ENCODE measurements at regions of chr5 and their contacts with region 1.

Region 1: DNA sequence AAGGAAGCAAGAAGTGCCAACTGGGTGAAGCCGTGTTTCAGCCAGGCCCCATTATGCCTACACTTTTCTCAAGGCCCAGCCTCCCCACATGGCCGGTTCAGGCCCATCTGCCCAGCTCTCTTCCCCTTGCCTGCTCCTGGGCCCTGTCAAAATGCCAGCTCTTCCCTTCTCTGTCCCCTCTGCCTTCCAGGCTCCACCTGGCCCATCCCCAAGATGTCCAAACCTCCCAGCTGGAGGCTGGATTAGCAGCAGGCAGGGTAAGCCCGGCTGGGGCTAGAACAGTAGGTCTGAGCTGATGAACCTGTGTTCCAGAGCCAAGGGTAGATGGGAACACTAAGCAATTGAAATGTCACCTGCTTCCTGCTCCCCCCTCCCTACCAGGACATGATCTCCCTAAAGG is 64.1 kb upstream of the HSPA9 start:
- DNase-seq: no peak
- ATAC-seq: no peak
- H3K4me3 ChIP-seq: no peak overlapping the region
- H3K4me3 Mint-ChIP-seq: no peak overlapping the region
- H3K27ac ChIP-seq: no peak overlapping the region
- H3K27ac Mint-ChIP-seq: no peak overlapping the region
- H3K4me1 ChIP-seq: peaks cover 0 to 2% of the 10 kb centered on the region in 2 experiments
- H3K4me1 Mint-ChIP-seq: peaks cover 0 to 5% (median 0%) of the 10 kb centered on the region in 3 donors
- H3K27me3 ChIP-seq: peaks cover 2 to 87% of the 10 kb centered on the region in 2 experiments
- H3K27me3 Mint-ChIP-seq: peaks cover 78 to 87% of the 10 kb centered on the region in 2 donors

Region 2: DNA sequence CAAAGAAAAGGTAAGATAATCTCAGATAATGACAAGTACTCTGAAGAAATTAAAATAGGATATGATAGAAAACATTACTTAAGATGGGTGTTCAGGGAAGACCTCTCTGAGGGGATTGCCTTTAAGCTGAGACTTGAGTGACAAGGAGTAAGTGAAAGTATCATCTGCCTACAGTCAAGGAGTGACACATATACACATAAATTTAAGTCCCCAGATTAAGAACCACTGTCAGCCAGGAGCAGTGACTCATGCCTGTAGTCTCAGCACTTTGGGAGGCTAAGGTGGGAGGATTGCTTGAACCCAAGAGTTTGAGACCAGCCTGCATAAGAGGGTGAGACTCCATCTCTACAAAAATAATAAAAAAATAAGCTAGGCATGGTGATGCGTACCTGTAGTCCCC is 1742.6 kb after region 1 on chr5:
- CTCF ChIA-PET with region 1: interaction called in 1 of 2 experiments, 11 read pairs
- POLR2A ChIA-PET with region 1: no interaction called
- DNase-seq: no peak
- ATAC-seq: no peak
- H3K4me3 ChIP-seq: no peak overlapping the region
- H3K4me3 Mint-ChIP-seq: no peak overlapping the region
- H3K27ac ChIP-seq: no peak overlapping the region
- H3K27ac Mint-ChIP-seq: no peak overlapping the region
- H3K4me1 ChIP-seq: peaks cover 0 to 5% of the 10 kb centered on the region in 2 experiments
- H3K4me1 Mint-ChIP-seq: peaks cover 3 to 7% (median 6%) of the 10 kb centered on the region in 3 donors
- H3K27me3 ChIP-seq: no peaks in the 10 kb centered on the region
- H3K27me3 Mint-ChIP-seq: no peaks in the 10 kb centered on the region

Measured in T-cell (primary cell).